ENCODE measurements at regions of chr1 and their contacts with region 1.

Region 1: DNA sequence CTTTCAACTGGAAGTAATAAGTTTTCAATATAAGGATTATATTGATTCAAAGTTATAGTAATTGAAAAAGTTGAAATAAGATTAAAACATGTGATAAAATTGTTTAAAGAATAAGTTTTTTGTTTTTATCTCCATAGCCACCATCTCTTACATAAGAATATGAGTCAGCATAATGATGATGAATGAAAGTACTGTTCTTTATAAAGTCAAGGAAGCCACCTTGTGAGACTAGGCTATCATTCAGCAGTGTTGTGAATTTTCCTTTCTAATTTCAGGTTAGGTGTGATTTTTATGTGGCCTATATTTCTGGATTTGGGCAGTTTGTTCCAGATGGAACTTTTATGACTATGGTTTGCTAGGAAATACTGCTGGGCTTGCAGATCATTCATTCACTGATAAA is 22.4 kb upstream of the ASB17 start:
- DNase-seq: no peak
- H3K4me3 ChIP-seq: no peak overlapping the region
- H3K27ac ChIP-seq: no peak overlapping the region
- H3K4me1 ChIP-seq: no peaks in the 10 kb centered on the region
- H3K27me3 ChIP-seq: peaks cover 0 to 3% of the 10 kb centered on the region in 2 experiments
- CTCF ChIP-seq: no peak
- POLR2A ChIP-seq: no peak

Region 2: GRCh38 chr1:75707191-75707590 is 247.4 kb before region 1 on chr1:
- CTCF ChIA-PET with region 1: no interaction called
- POLR2A ChIA-PET with region 1: no interaction called
- dilution Hi-C with region 1: no loop called
- intact Hi-C with region 1: no loop called
- DNase-seq: no peak
- H3K4me3 ChIP-seq: no peak overlapping the region
- H3K27ac ChIP-seq: no peak overlapping the region
- H3K4me1 ChIP-seq: no peaks in the 10 kb centered on the region
- H3K27me3 ChIP-seq: no peaks in the 10 kb centered on the region
- CTCF ChIP-seq: no peak
- POLR2A ChIP-seq: no peak

Region 3: GRCh38 chr1:76607717-76608116 is 653.1 kb after region 1 on chr1:
- CTCF ChIA-PET with region 1: no interaction called
- POLR2A ChIA-PET with region 1: no interaction called
- dilution Hi-C with region 1: no loop called
- intact Hi-C with region 1: loop called (anchors 10 kb)
- DNase-seq: no peak
- H3K4me3 ChIP-seq: no peak overlapping the region
- H3K27ac ChIP-seq: no peak overlapping the region
- H3K4me1 ChIP-seq: no peaks in the 10 kb centered on the region
- H3K27me3 ChIP-seq: no peaks in the 10 kb centered on the region
- CTCF ChIP-seq: no peak
- POLR2A ChIP-seq: no peak